Tibial artery (tissue), 4 donors: ENCODE measurements at regions of chr20 and their contacts with region 1.

Region 1: GRCh38 chr20:46169245-46170171 is 51.4 kb downstream of the CD40 start:
- DNase-seq: no peak
- H3K4me3 ChIP-seq: no peak overlapping the region
- H3K27ac ChIP-seq: no peak overlapping the region
- H3K4me1 ChIP-seq: peaks cover 0 to 2% (median 0%) of the 10 kb centered on the region in 4 donors
- H3K27me3 ChIP-seq: peaks cover 4 to 72% of the 10 kb centered on the region in 2 donors
- CTCF ChIP-seq: no peak

Region 2: GRCh38 chr20:46230801-46231282 is 61.3 kb after region 1 on chr20:
- intact Hi-C with region 1: no loop called
- DNase-seq: no peak
- H3K4me3 ChIP-seq: no peak overlapping the region
- H3K27ac ChIP-seq: no peak overlapping the region
- H3K4me1 ChIP-seq: no peaks in the 10 kb centered on the region
- H3K27me3 ChIP-seq: peaks cover 0 to 58% of the 10 kb centered on the region in 2 donors
- CTCF ChIP-seq: no peak

Region 3: DNA sequence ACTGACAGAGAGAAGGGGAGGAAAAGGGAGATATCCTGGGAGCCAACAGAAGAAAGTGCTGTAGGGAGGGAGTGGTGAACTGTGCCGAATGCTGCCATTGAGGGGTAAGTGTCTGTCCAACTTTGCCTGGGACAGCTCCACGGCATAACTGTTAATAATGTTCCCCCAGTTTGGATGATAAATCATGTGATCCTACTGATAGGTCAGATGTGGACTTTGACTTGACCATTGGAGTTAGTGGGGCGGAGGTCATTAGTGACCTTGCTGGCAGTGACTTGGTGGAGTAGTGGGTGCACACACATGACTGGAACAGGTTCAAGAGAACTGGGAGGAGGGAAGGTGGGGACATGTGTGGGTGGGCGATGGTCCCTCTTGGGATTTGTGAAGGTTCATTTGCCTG is 88.4 kb after region 1 on chr20:
- intact Hi-C with region 1: loop called (anchors 1 kb)
- DNase-seq: no peak
- H3K4me3 ChIP-seq: no peak overlapping the region
- H3K27ac ChIP-seq: no peak overlapping the region
- H3K4me1 ChIP-seq: no peaks in the 10 kb centered on the region
- H3K27me3 ChIP-seq: peaks cover 0 to 56% of the 10 kb centered on the region in 2 donors
- CTCF ChIP-seq: no peak

Region 4: GRCh38 chr20:46485431-46485830 is 315.9 kb after region 1 on chr20:
- intact Hi-C with region 1: no loop called
- DNase-seq: no peak
- H3K4me3 ChIP-seq: no peak overlapping the region
- H3K27ac ChIP-seq: no peak overlapping the region
- H3K4me1 ChIP-seq: no peaks in the 10 kb centered on the region
- H3K27me3 ChIP-seq: peaks cover 0 to 19% of the 10 kb centered on the region in 2 donors
- CTCF ChIP-seq: no peak